BJ (cell line): ENCODE measurements at regions of chr3 and their contacts with region 1.

Region 1: GRCh38 chr3:52820736-52821135 is 9.7 kb downstream of the ITIH4 start:
- DNase-seq: no peak
- H3K4me3 ChIP-seq: no peak overlapping the region
- H3K27me3 ChIP-seq: no peaks in the 10 kb centered on the region; the same call in 1 of the 2 replicates
- CTCF ChIP-seq: peak; percentile 74

Region 2: DNA sequence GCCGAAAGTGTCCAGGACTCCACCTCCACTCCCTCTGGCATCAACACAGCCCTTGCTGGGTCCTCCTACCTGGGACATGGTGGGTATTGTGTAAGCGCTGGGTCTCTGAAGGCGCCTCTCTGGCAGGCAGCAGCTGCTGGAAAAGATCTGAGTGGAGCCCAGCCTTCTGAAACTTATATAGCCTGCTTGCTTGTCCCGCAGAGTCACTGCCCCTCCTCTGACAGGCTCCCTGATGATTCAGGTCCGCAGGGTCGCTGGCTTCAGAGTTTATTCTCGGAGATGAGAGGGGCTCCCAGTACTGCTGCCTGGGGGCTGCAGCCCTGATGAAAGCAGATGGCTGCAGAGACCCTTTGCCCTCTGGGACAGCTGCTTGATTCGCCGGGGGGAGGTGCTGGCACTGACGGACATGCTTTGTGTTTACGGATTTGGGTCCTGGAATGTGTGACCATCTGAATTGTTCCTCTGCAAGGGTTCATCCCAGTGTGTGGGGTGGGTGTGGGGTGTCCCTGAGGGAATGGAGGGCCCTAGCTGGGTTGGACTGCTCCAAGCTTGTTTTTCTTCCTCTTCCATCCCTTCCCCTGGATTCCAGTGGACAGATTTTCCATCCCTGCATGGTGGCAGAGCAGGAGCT is 14.2 kb after region 1 on chr3 and contains the start of gene MUSTN1:
- CTCF ChIA-PET with region 1: interaction called, 10 read pairs
- POLR2A ChIA-PET with region 1: no interaction called
- DNase-seq: no peak
- H3K4me3 ChIP-seq: no peak within 1 kb of the TSS
- H3K27me3 ChIP-seq: no peaks in the 10 kb centered on the region
- CTCF ChIP-seq: no peak
- polyA plus RNA-seq, gene MUSTN1: not detected in 2 replicates